Caco-2 (cell line): ENCODE measurements at regions of chr6 and their contacts with region 1.

Region 1: DNA sequence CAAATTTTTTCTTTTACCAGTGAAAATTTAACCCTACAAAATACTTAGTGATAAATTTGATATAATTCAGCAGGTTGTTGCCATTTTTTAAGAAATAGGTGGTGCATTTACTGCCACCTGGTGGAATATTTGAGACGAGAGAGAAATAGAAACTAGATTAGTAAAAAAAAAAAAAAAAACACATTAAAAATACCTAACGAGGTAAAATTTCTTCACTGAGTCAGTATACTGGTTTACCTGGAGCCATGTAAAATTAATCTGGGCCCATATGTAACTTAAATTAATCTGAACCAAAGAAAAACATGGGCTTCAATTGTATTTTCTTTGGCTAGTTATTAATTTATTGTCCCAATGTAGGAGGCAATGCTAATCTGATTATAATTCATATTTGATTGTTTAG is 520.8 kb downstream of the EPM2A start:
- DNase-seq: peak in 1 of 2 experiments; percentile 29
- H3K4me3 ChIP-seq: no peak overlapping the region
- H3K4me3 Mint-ChIP-seq: no peak overlapping the region
- H3K27ac Mint-ChIP-seq: no peak overlapping the region
- H3K4me1 ChIP-seq: no peaks in the 10 kb centered on the region
- H3K4me1 Mint-ChIP-seq: no peaks in the 10 kb centered on the region
- H3K27me3 ChIP-seq: no peaks in the 10 kb centered on the region
- H3K27me3 Mint-ChIP-seq: no peaks in the 10 kb centered on the region
- CTCF ChIP-seq: peak; percentile 46 to 52

Region 2: DNA sequence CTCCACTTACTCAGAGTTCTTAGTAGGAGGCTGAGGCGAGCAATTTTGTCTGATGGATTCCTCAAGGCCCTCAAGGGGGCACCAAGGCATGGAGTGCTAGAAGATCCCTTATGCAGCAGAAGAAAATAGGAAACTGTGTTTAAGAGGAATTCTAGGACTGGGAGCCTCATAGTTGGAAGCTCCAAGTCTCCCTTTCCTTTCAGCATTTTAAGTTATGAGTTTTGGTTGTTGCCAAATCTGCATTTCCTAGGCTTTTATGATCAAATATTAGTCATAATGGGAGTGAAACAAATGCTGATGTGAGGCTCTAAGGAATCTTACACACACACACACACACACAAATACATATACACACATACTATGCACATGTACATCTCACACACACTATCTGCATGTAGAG is 215.4 kb before region 1 on chr6:
- CTCF ChIA-PET with region 1: no interaction called
- POLR2A ChIA-PET with region 1: no interaction called
- intact Hi-C with region 1: loop called (anchors 1 kb)
- DNase-seq: no peak
- H3K4me3 ChIP-seq: no peak overlapping the region
- H3K4me3 Mint-ChIP-seq: no peak overlapping the region
- H3K27ac Mint-ChIP-seq: no peak overlapping the region
- H3K4me1 ChIP-seq: no peaks in the 10 kb centered on the region
- H3K4me1 Mint-ChIP-seq: no peaks in the 10 kb centered on the region
- H3K27me3 ChIP-seq: no peaks in the 10 kb centered on the region; the same call in 1 of the 2 replicates
- H3K27me3 Mint-ChIP-seq: peaks cover 7% of the 10 kb centered on the region
- CTCF ChIP-seq: peak in 1 of 2 experiments; percentile 18

Region 3: DNA sequence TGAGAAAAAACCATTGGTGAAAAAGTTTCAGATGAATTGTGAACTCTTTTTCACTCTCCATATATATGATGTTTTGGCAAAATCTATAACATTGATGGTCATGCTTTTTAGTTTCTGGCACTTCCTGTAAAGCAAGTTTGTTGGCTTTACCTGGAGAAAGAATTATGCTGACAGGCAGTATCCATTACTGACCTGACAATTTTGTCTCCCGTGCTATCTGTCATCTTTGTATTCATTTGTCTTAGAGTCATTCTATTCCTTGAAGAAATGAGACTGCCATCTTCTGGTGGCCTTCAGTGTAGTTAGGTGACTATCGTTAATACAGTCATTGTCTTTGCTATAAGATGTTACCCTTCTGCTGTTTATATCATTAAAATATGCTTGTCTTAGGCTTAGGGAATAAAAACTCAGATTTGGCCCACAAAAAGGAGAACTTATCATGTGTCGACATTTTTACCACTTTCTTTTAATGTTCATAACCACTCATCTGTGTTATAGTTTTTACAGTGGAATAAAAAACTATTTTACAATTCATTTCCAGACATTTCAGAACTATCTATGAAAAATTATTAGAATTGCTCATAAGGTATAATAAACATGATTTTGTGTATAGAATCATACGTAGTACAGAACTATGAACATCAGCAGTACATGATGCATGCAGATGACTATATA is 186.3 kb before region 1 on chr6:
- CTCF ChIA-PET with region 1: no interaction called
- POLR2A ChIA-PET with region 1: no interaction called
- intact Hi-C with region 1: loop called (anchors 10 kb)
- DNase-seq: peak in 1 of 2 experiments; percentile 24
- H3K4me3 ChIP-seq: no peak overlapping the region
- H3K4me3 Mint-ChIP-seq: no peak overlapping the region
- H3K27ac Mint-ChIP-seq: no peak overlapping the region
- H3K4me1 ChIP-seq: peaks cover 8% of the 10 kb centered on the region; the same call in 1 of the 2 replicates
- H3K4me1 Mint-ChIP-seq: peaks cover 6% of the 10 kb centered on the region
- H3K27me3 ChIP-seq: no peaks in the 10 kb centered on the region
- H3K27me3 Mint-ChIP-seq: peaks cover 5% of the 10 kb centered on the region
- CTCF ChIP-seq: peak; percentile 56 to 70

Region 4: GRCh38 chr6:145116591-145117178 is 97.9 kb before region 1 on chr6:
- CTCF ChIA-PET with region 1: no interaction called
- POLR2A ChIA-PET with region 1: no interaction called
- intact Hi-C with region 1: loop called (anchors 5 kb)
- DNase-seq: no peak
- H3K4me3 ChIP-seq: no peak overlapping the region
- H3K4me3 Mint-ChIP-seq: no peak overlapping the region
- H3K27ac Mint-ChIP-seq: no peak overlapping the region
- H3K4me1 ChIP-seq: 0 out of 2 replicates have a peak, but pooled peaks cover 8% of the 10 kb centered on the region
- H3K4me1 Mint-ChIP-seq: no peaks in the 10 kb centered on the region
- H3K27me3 ChIP-seq: no peaks in the 10 kb centered on the region
- H3K27me3 Mint-ChIP-seq: peaks cover 3% of the 10 kb centered on the region
- CTCF ChIP-seq: no peak

Region 5: GRCh38 chr6:145633981-145634627 is 419.5 kb after region 1 on chr6:
- CTCF ChIA-PET with region 1: no interaction called
- POLR2A ChIA-PET with region 1: no interaction called
- intact Hi-C with region 1: loop called (anchors 1 kb)
- DNase-seq: peak; percentile 80 to 87
- H3K4me3 ChIP-seq: no peak overlapping the region
- H3K4me3 Mint-ChIP-seq: no peak overlapping the region
- H3K27ac Mint-ChIP-seq: no peak overlapping the region
- H3K4me1 ChIP-seq: no peaks in the 10 kb centered on the region
- H3K4me1 Mint-ChIP-seq: peaks cover 15% of the 10 kb centered on the region
- H3K27me3 ChIP-seq: no peaks in the 10 kb centered on the region
- H3K27me3 Mint-ChIP-seq: no peaks in the 10 kb centered on the region
- CTCF ChIP-seq: peak; percentile 85 to 90